ENCODE measurements at regions of chr1 and their contacts with region 1.

Region 1: GRCh38 chr1:26321315-26322041 is 3.7 kb downstream of the CD52 start:
- DNase-seq: peak; percentile 91
- ATAC-seq: peak; percentile 71
- H3K4me3 Mint-ChIP-seq: peak overlapping the region; percentile 87
- H3K27ac Mint-ChIP-seq: peak overlapping the region; percentile 98
- H3K4me1 Mint-ChIP-seq: peaks cover 69% of the 10 kb centered on the region
- H3K27me3 Mint-ChIP-seq: no peaks in the 10 kb centered on the region
- CTCF ChIP-seq: peak; percentile 32

Region 2: GRCh38 chr1:26169669-26170471 is 151.6 kb before region 1 on chr1 and contains the start of gene ZNF593:
- CTCF ChIA-PET with region 1: interaction called, 35 read pairs
- POLR2A ChIA-PET with region 1: interaction called, 8 read pairs
- intact Hi-C with region 1: loop called (anchors 1 kb)
- DNase-seq: peak; percentile 90
- ATAC-seq: peak; percentile 94
- H3K4me3 Mint-ChIP-seq: peak within 1 kb of the TSS; percentile 91
- H3K27ac Mint-ChIP-seq: peak within 1 kb of the TSS; percentile 84
- H3K4me1 Mint-ChIP-seq: peaks cover 16% of the 10 kb centered on the region
- H3K27me3 Mint-ChIP-seq: no peaks in the 10 kb centered on the region
- CTCF ChIP-seq: no peak
- total RNA-seq, gene ZNF593: 36.0 and 37.1 TPM in 2 replicates

Region 3: DNA sequence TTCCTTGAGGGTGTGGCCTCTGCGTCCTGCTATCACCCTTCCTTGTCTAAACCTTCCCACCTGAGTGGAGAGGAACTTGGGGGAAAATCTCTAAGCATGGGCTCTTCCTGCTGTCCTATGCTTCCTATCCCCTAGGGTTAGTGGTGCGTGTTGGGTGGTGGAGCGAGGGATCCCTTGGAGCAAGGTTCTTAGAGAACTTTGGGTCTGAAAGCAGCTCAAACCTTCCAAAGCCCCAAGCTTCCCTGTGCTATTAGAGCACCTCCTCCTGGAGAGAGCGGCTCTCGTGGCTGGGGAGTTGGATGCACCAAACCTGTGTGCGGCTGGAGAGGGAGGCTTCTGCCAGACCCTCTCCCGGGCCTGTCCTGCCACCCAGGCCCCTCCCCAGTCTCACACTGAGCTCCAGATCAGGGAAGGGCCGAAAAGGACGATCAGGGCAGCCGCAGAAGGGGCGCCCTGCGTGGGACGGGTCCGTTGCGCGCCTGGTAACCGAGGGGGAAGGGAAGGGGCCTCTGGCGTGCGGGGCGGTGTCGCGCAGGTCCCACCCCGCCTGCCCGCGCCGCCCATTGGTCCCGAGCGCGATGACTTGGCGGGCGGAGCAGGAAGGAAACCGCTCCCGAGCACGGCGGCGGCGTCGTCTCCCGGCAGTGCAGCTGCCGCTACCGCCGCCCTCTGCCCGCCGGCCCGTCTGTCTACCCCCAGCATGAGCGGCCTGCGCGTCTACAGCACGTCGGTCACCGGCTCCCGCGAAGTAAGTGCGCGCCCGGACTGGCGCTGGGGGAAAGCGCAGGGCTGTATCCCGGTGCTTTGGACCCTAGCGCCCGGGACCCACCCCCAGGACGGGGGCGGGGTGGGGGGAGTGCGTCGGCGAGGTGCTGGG is 41.8 kb before region 1 on chr1 and contains the start of gene SH3BGRL3:
- CTCF ChIA-PET with region 1: interaction called, 372 read pairs
- POLR2A ChIA-PET with region 1: interaction called, 1,638 read pairs
- intact Hi-C with region 1: loop called (anchors 1 kb)
- DNase-seq: peak; percentile 77
- ATAC-seq: peak; percentile 60
- H3K4me3 Mint-ChIP-seq: peak within 1 kb of the TSS; percentile 88
- H3K27ac Mint-ChIP-seq: peak within 1 kb of the TSS; percentile 85
- H3K4me1 Mint-ChIP-seq: peaks cover 82% of the 10 kb centered on the region
- H3K27me3 Mint-ChIP-seq: no peaks in the 10 kb centered on the region
- CTCF ChIP-seq: no peak
- total RNA-seq, gene SH3BGRL3: 265 and 285 TPM in 2 replicates

Region 4: DNA sequence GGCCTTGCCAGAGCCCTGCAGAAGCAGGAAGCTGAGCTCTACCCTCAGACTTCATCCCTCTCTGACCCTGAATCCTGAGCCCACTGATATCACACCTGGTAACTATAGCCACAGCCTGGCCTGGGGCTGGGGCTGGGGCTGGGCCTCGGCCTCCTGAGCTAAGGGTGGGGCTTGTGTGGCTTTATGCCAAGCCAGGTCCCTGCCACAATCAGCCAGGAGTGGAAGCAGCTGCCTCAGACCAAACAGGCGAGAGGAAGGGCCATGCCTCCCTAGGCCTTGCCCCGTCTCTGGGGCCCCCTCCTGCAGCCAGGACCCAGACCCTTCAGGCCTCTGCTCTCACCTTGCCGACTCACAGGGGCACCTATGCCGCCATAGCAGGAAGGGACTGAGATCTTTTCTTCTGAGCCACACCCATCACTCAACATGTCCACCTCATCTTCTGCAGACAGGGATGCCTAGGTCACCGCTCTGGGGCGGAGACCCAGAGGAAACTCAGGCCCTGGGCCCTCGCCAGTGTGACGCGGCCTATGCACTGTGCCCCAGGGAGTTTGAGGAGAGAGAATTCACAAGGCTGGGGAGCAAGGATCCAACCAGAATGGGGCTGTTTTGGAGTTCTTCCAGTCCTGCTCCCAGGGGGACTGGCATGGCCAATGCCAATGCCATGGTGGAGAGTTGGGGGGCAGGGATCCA is 20.7 kb before region 1 on chr1:
- CTCF ChIA-PET with region 1: interaction called, 3 read pairs
- POLR2A ChIA-PET with region 1: interaction called, 28 read pairs
- intact Hi-C with region 1: no loop called
- DNase-seq: no peak
- ATAC-seq: no peak
- H3K4me3 Mint-ChIP-seq: no peak overlapping the region
- H3K27ac Mint-ChIP-seq: no peak overlapping the region
- H3K4me1 Mint-ChIP-seq: peaks cover 32% of the 10 kb centered on the region
- H3K27me3 Mint-ChIP-seq: no peaks in the 10 kb centered on the region
- CTCF ChIP-seq: no peak

Region 5: GRCh38 chr1:26363549-26364448 is 42.3 kb after region 1 on chr1:
- CTCF ChIA-PET with region 1: interaction called, 7 read pairs
- POLR2A ChIA-PET with region 1: interaction called, 8 read pairs
- intact Hi-C with region 1: loop called (anchors 1 kb)
- DNase-seq: peak; percentile 81
- ATAC-seq: peak; percentile 72
- H3K4me3 Mint-ChIP-seq: no peak overlapping the region
- H3K27ac Mint-ChIP-seq: no peak overlapping the region
- H3K4me1 Mint-ChIP-seq: peaks cover 27% of the 10 kb centered on the region
- H3K27me3 Mint-ChIP-seq: peaks cover 24% of the 10 kb centered on the region
- CTCF ChIP-seq: peak; percentile 90

Region 6: DNA sequence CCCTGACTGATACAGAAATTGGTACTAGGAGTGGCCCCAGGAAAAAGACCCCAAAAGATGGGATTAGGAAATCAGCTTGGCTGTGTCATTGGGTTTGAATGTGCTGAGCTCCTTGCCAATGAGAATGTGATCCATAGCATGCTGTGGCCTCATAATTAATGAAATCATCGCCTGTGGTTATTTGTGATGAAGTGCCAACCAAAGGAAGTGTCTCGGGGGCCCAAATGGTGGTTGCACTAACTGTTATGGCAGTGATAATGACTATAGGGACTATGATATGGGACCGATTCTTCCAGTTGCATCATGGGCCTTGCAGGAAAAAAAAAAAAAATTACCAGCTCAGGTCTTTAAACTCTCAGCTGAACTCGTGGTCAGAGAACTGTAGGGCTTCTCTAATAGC is 489.6 kb after region 1 on chr1:
- CTCF ChIA-PET with region 1: no interaction called
- POLR2A ChIA-PET with region 1: no interaction called
- intact Hi-C with region 1: no loop called
- DNase-seq: no peak
- ATAC-seq: no peak
- H3K4me3 Mint-ChIP-seq: no peak overlapping the region
- H3K27ac Mint-ChIP-seq: no peak overlapping the region
- H3K4me1 Mint-ChIP-seq: peaks cover 4% of the 10 kb centered on the region
- H3K27me3 Mint-ChIP-seq: peaks cover 1% of the 10 kb centered on the region
- CTCF ChIP-seq: no peak

Measured in activated B cell treated with CpG ODN at 0.5 μM for 24 hours (primary cell).